MCF 10A (cell line): ENCODE measurements at regions of chr15 and their contacts with region 1.

Region 1: GRCh38 chr15:77633134-77633912 is 611 bp upstream of the LINGO1 start:
- DNase-seq: peak; percentile 84
- H3K4me3 Mint-ChIP-seq: peak overlapping the region; percentile 57
- H3K27ac Mint-ChIP-seq: no peak overlapping the region
- H3K4me1 Mint-ChIP-seq: peaks cover 4% of the 10 kb centered on the region
- H3K27me3 Mint-ChIP-seq: peaks cover 65% of the 10 kb centered on the region
- CTCF ChIP-seq: peak; percentile 99

Region 2: DNA sequence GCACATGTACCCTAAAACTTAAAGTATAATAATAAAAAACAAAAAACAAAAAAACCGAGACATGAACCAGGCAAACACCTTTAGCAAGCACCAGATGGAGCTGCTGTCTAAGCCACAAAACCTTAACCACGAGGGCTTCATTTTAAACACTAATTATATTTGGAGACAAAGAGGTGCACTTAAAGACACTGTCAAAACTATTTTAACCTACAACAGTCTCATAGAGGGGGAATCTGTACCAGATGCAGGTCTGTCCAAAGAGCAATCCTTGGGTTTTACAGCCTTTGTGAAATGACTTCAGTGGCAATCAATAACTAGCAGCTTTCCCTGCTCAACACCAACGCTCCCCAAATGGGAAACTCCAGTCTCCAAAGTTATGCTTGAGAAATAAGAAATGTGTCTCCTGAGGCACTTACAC is 446.7 kb before region 1 on chr15:
- CTCF ChIA-PET with region 1: interaction called, 4 read pairs
- POLR2A ChIA-PET with region 1: no interaction called
- intact Hi-C with region 1: loop called (anchors 2 kb)
- DNase-seq: peak; percentile 39
- H3K4me3 Mint-ChIP-seq: no peak overlapping the region
- H3K27ac Mint-ChIP-seq: no peak overlapping the region
- H3K4me1 Mint-ChIP-seq: no peaks in the 10 kb centered on the region
- H3K27me3 Mint-ChIP-seq: no peaks in the 10 kb centered on the region
- CTCF ChIP-seq: peak; percentile 48

Region 3: GRCh38 chr15:77591968-77592613 is 41.2 kb before region 1 on chr15:
- CTCF ChIA-PET with region 1: interaction called, 10 read pairs
- POLR2A ChIA-PET with region 1: no interaction called
- intact Hi-C with region 1: no loop called
- DNase-seq: no peak
- H3K4me3 Mint-ChIP-seq: no peak overlapping the region
- H3K27ac Mint-ChIP-seq: no peak overlapping the region
- H3K4me1 Mint-ChIP-seq: no peaks in the 10 kb centered on the region
- H3K27me3 Mint-ChIP-seq: peaks cover 13% of the 10 kb centered on the region
- CTCF ChIP-seq: no peak

Region 4: DNA sequence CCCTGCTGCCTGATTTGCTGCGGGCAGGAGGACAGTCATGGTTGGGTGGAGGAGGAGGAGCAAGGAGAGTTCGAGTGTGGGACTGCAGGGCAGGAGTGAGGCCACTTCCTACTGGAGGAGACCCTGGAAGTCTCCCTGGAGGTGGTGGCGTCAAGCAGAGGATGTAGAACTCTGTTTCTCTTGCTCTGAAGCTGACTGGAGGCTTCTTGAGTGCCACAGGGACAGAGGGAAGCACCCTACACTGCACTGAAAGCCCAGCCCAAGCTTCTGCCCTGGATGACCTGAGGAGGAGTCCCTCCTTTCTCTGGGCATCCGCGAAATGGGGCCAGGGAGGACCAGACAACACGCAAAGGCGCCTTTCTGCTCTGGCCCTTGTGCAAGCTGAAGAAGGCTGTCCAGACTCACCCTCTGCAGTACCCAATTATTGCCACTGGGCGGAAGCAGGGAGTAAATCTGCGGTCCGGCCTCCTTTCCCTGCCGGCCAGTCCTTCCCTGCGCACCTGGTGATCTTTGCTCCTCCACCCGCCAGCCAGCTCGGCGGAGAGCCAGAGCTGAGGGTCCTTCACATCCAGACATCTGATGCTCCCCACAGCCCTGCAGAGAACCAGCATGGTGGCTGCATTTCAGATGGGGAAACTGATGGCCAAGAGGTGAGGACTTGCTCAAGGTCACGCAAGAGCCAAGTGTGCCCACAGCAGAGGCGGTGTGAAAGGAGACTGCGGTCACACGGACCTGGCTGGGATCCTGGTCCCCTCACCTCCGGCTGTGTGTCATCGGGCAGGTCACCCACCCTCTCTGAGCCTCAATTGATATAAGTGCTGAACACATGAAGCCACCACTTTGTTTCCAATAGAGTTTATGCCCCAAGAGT is 237.1 kb after region 1 on chr15:
- CTCF ChIA-PET with region 1: interaction called, 6 read pairs
- POLR2A ChIA-PET with region 1: no interaction called
- intact Hi-C with region 1: loop called (anchors 5 kb)
- DNase-seq: peak; percentile 70
- H3K4me3 Mint-ChIP-seq: no peak overlapping the region
- H3K27ac Mint-ChIP-seq: no peak overlapping the region
- H3K4me1 Mint-ChIP-seq: peaks cover 6% of the 10 kb centered on the region
- H3K27me3 Mint-ChIP-seq: peaks cover 14% of the 10 kb centered on the region
- CTCF ChIP-seq: peak; percentile 79